A549 (cell line): ENCODE measurements at regions of chr12 and their contacts with region 1.

Region 1: DNA sequence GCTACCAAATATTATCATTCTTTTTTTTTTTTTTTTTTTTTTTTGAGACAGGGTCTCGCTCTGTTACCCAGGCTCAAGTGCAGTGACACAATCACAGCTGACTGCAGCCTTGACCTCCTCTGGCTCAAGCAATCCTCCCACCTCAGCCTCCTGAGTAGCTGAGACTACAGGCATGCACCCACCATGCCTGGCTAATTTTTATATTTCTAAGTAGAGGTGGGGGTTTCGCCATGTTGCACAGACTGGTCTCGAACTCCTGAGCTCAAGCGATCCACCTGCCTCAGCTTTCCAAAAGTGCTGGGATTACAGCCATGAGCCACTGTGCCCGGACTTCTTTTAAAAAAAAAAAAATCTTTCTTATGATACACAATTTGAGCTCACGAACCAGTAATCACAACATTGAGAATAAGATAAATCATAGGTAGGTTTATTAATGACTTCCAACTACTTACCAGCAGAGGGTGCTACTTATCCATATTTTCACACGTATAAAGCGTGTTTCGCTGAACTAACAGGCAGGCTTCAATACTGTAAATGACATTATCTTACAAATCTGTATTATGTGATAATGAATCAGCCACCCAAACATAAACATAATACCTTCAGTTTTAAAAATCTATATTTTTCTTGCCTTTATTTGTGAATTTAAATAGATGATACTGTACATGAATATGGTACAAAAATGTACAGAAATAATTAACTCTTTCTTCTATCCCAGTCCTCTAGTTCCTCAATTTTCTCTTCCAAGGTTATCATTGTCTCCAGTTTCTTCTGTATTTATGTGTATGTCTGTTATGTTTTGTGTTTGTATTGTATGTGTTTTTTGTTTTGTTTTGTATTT is 42.5 kb upstream of the BCAT1 start:
- DNase-seq: peak; percentile 44 to 72
- ATAC-seq: peak; percentile 74 to 93; a peak in 4 of 6 replicates
- H3K4me3 ChIP-seq: no peak overlapping the region
- H3K27ac ChIP-seq: no peak overlapping the region
- H3K4me1 ChIP-seq: no peaks in the 10 kb centered on the region
- CTCF ChIP-seq: peak; percentile 77
- EP300 ChIP-seq: no peak
- POLR2A ChIP-seq: no peak
- RAD21 ChIP-seq: peak; percentile 84 to 87

Region 2: GRCh38 chr12:24972078-24972477 is 19.4 kb before region 1 on chr12:
- CTCF ChIA-PET with region 1: interaction called, 13 read pairs
- POLR2A ChIA-PET with region 1: no interaction called
- DNase-seq: no peak
- ATAC-seq: no peak
- H3K4me3 ChIP-seq: no peak overlapping the region
- H3K27ac ChIP-seq: no peak overlapping the region
- H3K4me1 ChIP-seq: no peaks in the 10 kb centered on the region
- CTCF ChIP-seq: no peak
- EP300 ChIP-seq: no peak
- POLR2A ChIP-seq: no peak
- RAD21 ChIP-seq: no peak

Region 3: GRCh38 chr12:25009496-25010092 is 18.2 kb after region 1 on chr12:
- CTCF ChIA-PET with region 1: interaction called, 13 read pairs
- POLR2A ChIA-PET with region 1: no interaction called
- DNase-seq: no peak
- ATAC-seq: no peak
- H3K4me3 ChIP-seq: no peak overlapping the region
- H3K27ac ChIP-seq: no peak overlapping the region
- H3K4me1 ChIP-seq: no peaks in the 10 kb centered on the region
- CTCF ChIP-seq: no peak
- EP300 ChIP-seq: no peak
- POLR2A ChIP-seq: no peak
- RAD21 ChIP-seq: no peak

Region 4: DNA sequence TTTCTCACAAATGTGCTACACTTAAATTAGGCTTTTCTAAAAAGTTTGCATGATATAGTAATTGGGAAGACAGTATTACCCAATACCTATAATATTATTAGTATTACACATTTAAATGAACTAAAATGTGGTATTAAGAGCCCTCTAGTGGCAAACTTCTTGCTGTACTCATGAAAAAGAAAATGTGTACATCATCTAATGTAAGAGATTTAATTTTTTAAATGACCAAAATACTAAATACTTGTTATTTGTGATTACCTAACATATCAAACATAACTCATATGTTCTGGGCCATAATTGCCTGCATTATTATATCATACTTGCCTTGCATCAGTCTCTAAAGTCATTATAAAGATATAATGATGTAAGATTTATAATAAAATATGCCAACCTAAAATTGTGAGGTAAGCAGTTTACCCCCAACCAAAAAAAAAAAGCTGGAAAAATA is 139.3 kb after region 1 on chr12:
- CTCF ChIA-PET with region 1: interaction called, 28 read pairs
- POLR2A ChIA-PET with region 1: no interaction called
- DNase-seq: peak; percentile 21 to 44
- ATAC-seq: peak in 1 of 2 experiments; percentile 57; a peak in 2 of 6 replicates
- H3K4me3 ChIP-seq: no peak overlapping the region
- H3K27ac ChIP-seq: no peak overlapping the region
- H3K4me1 ChIP-seq: no peaks in the 10 kb centered on the region
- CTCF ChIP-seq: peak; percentile 68
- EP300 ChIP-seq: no peak
- POLR2A ChIP-seq: no peak
- RAD21 ChIP-seq: peak; percentile 75 to 85

Region 5: DNA sequence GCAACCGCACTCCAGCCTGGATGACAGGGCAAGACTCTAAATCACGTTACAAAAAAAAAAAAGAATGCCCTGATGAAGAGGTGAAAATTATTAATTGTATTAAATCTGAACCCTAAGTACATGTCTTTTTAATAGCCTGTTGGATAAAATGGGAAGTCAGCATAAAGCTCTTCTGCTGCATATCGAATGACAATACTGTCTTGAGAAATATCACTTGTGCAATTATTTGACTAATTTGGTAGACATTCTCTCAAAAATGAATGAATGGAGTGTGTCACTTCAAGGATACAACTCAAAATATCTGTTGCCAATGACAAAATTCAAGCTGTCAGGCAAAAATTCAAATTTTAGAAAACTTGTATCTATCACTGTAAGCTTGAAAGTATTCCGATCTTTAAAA is 164.6 kb after region 1 on chr12:
- CTCF ChIA-PET with region 1: interaction called, 20 read pairs
- POLR2A ChIA-PET with region 1: no interaction called
- DNase-seq: no peak
- ATAC-seq: no peak
- H3K4me3 ChIP-seq: no peak overlapping the region
- H3K27ac ChIP-seq: no peak overlapping the region
- H3K4me1 ChIP-seq: peaks cover 3% of the 10 kb centered on the region; the same call in 2 of the 3 replicates
- CTCF ChIP-seq: no peak
- EP300 ChIP-seq: no peak
- POLR2A ChIP-seq: no peak
- RAD21 ChIP-seq: no peak